Ascending aorta (tissue), 2 donors: ENCODE measurements at regions of chr11 and their contacts with region 1.

Region 1: GRCh38 chr11:1546536-1547400 is 25.3 kb downstream of the DUSP8 start:
- DNase-seq: peak in 1 of 2 donors; percentile 77
- H3K4me3 ChIP-seq: peak overlapping the region; percentile 46 to 70
- H3K27ac ChIP-seq: peak overlapping the region; percentile 75 to 87
- H3K4me1 ChIP-seq: peaks cover 8 to 24% of the 10 kb centered on the region in 2 donors
- H3K27me3 ChIP-seq: no peaks in the 10 kb centered on the region
- CTCF ChIP-seq: peak; percentile 75 to 94 (median 86)

Region 2: DNA sequence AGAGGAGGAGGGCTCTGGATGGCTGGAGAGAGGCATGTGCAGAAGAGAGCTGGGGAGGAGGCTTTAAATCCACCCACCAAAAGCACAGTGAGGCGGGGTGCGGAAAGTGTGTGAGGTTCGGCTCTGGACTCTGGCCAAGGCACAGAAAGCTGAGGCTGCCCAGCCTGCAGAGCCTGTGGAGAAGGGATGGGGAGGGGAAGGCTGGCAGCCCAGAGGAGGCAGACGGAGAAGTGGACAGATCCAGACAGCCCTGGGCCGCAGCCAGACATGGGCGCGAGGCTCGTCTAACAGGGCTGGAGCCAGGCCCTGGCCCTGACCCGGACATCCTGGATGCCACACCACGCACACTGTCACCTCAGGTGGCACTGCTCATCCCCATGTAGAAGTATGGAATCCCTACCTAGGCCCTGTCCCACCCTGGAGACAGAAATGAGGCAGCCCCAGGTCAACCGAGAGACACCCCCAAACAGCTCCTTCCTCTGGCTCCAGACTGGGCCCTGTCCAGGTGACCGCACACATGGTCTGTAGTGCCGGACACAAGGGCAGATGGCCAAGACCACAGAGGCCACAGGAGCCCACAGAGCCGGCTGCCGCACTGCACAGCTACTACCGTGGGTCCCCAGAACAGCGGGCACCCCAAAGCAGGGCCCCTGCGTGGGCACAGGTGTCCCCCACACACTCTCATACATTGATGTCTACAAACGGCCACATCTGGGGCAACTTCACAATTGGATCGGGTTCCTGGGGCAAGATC is 43.6 kb before region 1 on chr11:
- intact Hi-C with region 1: no loop called
- DNase-seq: no peak
- H3K4me3 ChIP-seq: peak overlapping the region; percentile 8 to 35
- H3K27ac ChIP-seq: peak overlapping the region; percentile 68 to 86
- H3K4me1 ChIP-seq: peaks cover 34 to 69% of the 10 kb centered on the region in 2 donors
- H3K27me3 ChIP-seq: no peaks in the 10 kb centered on the region
- CTCF ChIP-seq: no peak

Region 3: DNA sequence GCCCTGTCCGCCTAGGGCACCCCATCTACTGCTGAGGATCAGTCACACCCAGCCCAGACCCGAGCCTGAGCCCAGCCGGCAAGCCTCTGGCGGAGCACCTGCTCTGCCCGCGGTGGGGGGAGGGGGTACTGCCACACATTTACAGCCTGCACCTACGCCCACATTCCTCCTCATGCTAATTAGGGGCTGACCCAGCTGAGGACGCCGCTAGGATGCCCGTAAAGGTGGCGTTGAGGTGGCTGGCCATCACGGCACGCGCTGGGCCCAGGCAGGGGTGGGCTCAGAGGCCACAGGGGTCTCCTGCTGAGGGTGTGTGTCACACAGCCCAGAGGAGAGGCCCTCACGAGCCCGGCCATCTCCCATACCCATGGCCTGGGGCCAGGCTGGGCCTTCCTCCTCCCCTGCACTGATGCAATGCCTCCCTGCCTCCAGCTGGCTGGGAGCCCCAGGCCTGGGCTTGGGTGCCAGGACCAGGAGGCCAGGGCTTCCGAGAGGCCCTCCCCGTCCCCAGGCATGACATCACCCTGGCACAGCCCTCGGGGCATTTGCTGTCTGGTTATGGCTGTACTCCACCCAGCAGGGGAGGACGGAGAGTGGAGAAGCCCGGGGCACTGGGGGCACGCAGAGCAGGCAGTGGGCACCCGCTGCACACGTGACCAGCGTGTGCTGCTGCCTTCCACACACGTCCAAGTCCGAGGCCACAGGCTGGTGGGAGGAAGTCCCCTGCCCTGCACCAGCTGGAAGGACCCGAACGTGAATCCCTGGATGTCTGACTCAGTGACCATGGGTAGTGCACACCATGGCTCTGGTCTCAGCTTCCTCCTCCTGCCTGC is 12.6 kb after region 1 on chr11:
- intact Hi-C with region 1: loop called (anchors 1 kb)
- DNase-seq: peak; percentile 90 to 99
- H3K4me3 ChIP-seq: peak overlapping the region; percentile 31 to 47
- H3K27ac ChIP-seq: peak overlapping the region; percentile 93 to 98
- H3K4me1 ChIP-seq: peaks cover 15 to 36% of the 10 kb centered on the region in 2 donors
- H3K27me3 ChIP-seq: no peaks in the 10 kb centered on the region
- CTCF ChIP-seq: peak in 1 of 3 experiments; percentile 21

Region 4: DNA sequence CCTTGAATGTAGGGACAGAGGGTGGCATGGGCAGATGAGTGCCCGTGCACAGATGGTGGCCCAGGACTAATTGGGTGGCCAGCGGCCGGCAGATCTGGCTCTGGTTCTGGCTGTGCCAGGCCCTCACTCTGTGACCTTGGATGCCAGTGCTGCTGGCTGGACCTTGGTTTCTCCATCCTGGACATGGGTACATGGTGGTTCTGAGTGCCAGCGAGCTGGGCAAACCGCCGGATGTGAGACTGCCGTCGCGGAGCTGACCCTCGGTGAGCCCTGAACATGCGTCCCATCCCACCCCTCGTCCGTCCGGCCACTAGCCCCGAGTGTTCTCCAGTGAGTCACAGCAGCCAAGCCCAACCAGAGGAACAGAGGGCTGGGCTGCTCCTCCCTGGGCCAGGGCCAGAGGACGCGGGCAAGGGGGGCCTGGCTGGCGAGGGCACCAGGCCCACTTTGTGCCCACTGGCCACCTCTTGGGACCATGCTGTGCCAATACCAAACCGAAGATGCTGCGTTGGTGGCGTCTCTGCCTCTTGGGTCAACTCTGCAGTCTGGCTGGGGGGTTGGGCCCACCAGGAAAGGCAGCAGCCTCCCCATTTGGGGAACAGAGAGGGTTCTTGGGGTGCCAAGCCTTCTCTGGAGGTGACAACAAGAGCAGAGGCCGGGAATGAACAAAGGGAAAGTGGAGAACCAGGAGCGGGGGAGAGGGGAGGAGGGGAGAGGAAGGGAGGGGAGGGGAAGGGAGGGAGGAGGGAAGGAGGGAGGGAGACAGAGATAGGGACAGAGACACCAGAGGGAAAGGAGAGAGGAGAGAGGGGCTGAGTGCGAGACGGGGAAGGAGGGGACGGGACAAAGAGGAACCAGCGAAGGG is 316.8 kb after region 1 on chr11:
- intact Hi-C with region 1: loop called (anchors 5 kb)
- DNase-seq: peak; percentile 81 to 96
- H3K4me3 ChIP-seq: peak overlapping the region; percentile 32 to 34
- H3K27ac ChIP-seq: peak overlapping the region; percentile 86 to 94
- H3K4me1 ChIP-seq: peaks cover 15 to 46% of the 10 kb centered on the region in 2 donors
- H3K27me3 ChIP-seq: no peaks in the 10 kb centered on the region
- CTCF ChIP-seq: no peak